ENCODE measurements at regions of chr4 and their contacts with region 1.

Region 1: DNA sequence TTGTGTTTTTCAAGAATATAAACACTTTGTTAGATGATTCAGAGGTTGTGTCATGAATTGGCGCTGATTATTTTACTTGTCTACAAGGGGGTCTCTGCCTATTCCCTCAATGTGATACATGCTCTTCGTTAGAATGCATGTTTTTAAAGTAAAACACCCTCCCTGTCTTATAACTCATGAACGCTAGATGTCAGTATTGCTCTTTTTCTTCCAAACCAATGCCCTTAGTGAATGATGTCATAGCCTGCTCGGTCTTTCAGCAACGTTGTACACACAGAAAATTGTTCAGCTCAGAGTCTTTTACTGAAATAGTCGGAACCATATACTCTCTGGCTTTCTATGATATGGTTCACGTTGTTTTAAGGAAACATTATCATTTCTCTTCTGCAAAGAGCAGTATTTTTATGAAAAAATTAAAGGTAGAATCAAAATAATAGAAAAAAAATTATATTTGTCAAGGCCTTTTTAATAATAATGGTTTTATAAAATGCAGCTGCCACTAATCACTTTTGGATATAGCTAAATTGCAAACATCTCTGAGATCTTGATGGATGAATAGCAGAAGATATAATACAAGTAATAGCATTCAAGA is 292.9 kb downstream of the TLL1 start:
- DNase-seq: no peak
- ATAC-seq: peak; percentile 75

Region 2: GRCh38 chr4:166064721-166065120 is 101.2 kb before region 1 on chr4:
- intact Hi-C with region 1: no loop called
- DNase-seq: no peak
- ATAC-seq: no peak

Region 3: DNA sequence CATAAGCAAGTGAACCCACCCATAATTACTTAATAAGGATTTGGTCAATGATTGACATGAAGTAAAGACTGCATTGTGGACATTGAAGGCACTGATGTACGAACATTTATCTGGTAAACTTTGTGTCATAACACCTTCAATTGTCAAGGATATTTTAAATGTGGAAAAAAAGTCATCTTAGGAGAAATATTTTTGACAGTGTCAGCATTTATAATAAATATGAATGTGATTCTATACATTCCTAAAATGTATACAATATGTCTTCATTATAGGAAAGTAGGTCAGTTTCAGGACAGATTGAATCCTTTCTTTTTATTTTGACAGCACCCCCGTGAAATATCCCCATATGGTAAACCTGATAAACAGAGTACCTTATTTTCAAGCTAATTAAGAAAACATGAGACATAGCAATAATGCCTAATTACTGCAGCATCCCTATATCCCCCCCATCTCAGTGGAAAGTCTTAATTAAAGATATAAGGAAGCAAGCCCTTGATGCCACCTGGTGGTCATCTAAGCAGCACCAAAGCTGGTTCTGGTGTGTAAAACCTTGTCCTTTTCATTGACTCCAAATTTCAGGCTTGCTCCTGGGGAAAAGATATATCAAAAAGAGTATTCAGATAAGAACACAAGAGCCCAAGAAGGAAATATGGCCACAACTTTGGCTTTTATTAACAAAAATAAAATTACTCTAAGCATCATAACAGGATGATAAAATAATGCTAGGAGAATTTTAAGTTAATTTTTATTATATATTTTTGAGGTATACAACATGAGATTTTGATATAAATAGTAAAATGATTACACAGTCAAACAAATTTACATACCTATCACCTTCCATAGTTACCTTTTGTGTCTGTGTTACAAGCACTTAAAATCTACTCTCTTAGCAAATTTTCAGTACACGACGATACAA is 86.8 kb after region 1 on chr4:
- intact Hi-C with region 1: loop called (anchors 5 kb)
- DNase-seq: no peak
- ATAC-seq: no peak

Region 4: DNA sequence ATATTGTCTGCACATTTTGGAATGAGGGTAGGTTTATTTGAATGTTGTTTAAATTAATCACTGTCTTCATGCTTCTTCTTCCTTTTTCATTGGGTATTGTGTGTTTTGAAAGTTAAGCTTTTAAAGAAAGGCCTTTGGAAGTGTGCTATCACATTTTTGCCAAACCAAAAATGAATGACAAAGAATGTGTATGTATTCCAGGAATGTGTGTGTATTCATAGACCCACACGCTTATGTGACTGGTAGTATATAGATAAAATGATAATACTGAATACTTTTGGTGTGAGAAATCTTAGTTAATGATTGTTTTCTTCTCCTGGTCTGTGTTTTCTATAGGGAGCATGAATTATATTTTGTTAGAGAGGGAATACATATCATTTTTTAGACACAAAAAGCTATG is 111.5 kb after region 1 on chr4:
- intact Hi-C with region 1: no loop called
- DNase-seq: no peak
- ATAC-seq: no peak

Region 5: GRCh38 chr4:166862032-166862431 is 696.1 kb after region 1 on chr4:
- intact Hi-C with region 1: no loop called
- DNase-seq: no peak
- ATAC-seq: no peak

Measured in Right ventricle myocardium superior (tissue), 1 donor.